Panc1 (cell line): ENCODE measurements at regions of chr16 and their contacts with region 1.

Region 1: GRCh38 chr16:86072328-86073102 is 173.6 kb downstream of the IRF8 start:
- DNase-seq: peak; percentile 38
- ATAC-seq: peak; percentile 79
- H3K4me3 ChIP-seq: no peak overlapping the region
- H3K27ac ChIP-seq: no peak overlapping the region
- H3K4me1 ChIP-seq: no peaks in the 10 kb centered on the region
- H3K27me3 ChIP-seq: no peaks in the 10 kb centered on the region
- CTCF ChIP-seq: peak; percentile 85

Region 2: DNA sequence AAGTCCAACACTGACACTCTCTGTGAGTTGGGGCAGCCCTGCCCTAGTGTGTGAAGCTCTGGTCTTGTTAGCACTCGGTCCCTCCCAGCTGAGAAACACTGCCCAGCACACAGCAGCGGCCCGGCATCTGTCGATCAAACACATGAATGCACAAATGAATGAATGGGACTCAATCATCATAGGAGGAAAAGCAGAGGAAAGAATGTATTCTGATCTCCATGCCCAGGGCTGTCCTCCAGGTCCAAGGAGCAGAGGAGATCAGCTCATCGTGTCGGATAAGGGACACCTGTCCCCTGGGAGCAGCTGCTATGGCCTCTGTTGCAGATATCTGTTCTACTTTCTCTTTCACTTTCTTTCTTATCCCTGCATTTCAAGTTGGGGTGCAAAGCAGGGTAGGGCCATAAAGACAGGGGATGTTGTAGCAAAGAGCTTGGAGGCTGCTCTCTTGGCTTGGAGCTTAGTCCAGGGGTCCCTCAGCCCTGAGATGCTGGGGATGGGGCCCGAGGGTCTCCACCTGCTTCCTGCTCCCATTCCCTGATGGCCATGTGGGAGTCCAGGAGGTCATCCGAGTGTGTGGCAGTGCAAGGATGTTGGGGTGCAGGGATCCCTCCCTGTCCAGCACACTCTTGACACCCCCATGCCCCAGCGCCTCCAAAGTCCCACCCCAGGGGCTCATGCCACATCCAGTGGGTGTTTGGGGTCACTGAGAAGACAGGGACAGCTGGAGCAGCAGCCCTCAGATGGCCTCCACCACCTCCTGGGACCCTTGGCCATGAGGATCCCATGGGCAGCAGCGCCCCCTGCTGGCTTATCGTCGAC is 85.4 kb before region 1 on chr16:
- CTCF ChIA-PET with region 1: no interaction called
- POLR2A ChIA-PET with region 1: no interaction called
- in situ Hi-C with region 1: no loop called
- intact Hi-C with region 1: no loop called
- DNase-seq: no peak
- ATAC-seq: peak; percentile 70
- H3K4me3 ChIP-seq: peak overlapping the region; percentile 29 to 42
- H3K27ac ChIP-seq: no peak overlapping the region
- H3K4me1 ChIP-seq: no peaks in the 10 kb centered on the region
- H3K27me3 ChIP-seq: peaks cover 2% of the 10 kb centered on the region; the same call in 1 of the 2 replicates
- CTCF ChIP-seq: peak; percentile 65; the same call in 1 of the 2 replicates

Region 3: GRCh38 chr16:86519649-86520316 is 447.3 kb after region 1 on chr16:
- CTCF ChIA-PET with region 1: interaction called, 7 read pairs
- POLR2A ChIA-PET with region 1: no interaction called
- in situ Hi-C with region 1: no loop called
- intact Hi-C with region 1: loop called (anchors 1 kb)
- DNase-seq: no peak
- ATAC-seq: peak; percentile 52
- H3K4me3 ChIP-seq: peak overlapping the region in 1 of 2 experiments; percentile 3; a peak in 3 of 4 replicates
- H3K27ac ChIP-seq: no peak overlapping the region
- H3K4me1 ChIP-seq: no peaks in the 10 kb centered on the region
- H3K27me3 ChIP-seq: peaks cover under 1% of the 10 kb centered on the region; the same call in 1 of the 2 replicates
- CTCF ChIP-seq: peak; percentile 92